PC-9 (cell line): ENCODE measurements at regions of chr11 and their contacts with region 1.

Region 1: GRCh38 chr11:72080256-72080974 is at the starts of genes LRRC51 and NUMA1:
- DNase-seq: peak; percentile 100
- H3K4me3 ChIP-seq: peak within 1 kb of the TSS; percentile 92
- H3K27ac ChIP-seq: peak within 1 kb of the TSS; percentile 62
- H3K4me1 ChIP-seq: peaks cover 41% of the 10 kb centered on the region
- H3K27me3 ChIP-seq: no peaks in the 10 kb centered on the region
- CTCF ChIP-seq: no peak
- total RNA-seq, gene LRRC51: 17.5 and 19.6 TPM in 2 replicates
- total RNA-seq, gene NUMA1: 221 and 267 TPM in 2 replicates

Region 2: DNA sequence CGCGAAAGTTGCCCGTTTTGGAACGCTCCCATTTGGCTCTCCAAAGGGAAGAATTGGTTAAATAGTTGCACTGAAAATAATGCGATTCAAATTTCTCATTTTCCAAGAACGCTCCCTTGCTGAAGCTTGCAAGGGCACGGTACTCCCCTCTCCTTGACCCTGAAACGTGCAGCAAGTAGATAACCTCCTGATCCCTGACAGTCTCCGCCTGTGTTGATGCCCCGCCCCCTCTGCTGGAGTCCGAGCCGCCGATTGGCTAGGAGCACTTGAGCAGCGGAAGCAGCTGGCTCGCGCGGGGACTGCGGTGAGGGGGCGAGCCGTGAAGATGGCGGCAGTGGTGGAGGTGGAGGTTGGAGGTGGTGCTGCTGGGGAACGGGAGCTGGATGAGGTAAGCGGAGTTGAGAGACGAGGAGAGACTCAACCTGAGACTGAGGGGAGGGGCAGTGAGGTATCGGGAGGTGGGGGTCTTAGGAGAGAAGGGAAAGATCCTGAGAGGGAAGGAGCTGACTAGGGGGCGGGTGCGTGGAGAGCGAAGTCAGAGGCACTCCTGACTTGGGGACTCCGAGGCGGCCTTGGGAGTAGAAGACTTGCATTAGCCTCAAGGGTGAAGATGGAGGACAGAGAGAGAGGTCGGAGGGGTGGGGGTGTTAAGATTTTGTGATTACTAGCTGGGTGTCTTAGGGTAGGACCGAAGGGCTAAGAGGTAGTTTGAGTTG is 151.5 kb before region 1 on chr11 and contains the start of gene RNF121:
- CTCF ChIA-PET with region 1: no interaction called
- POLR2A ChIA-PET with region 1: interaction called, 5 read pairs
- intact Hi-C with region 1: loop called (anchors 5 kb)
- DNase-seq: peak; percentile 93 to 95
- H3K4me3 ChIP-seq: peak within 1 kb of the TSS; percentile 89
- H3K27ac ChIP-seq: peak within 1 kb of the TSS; percentile 79
- H3K4me1 ChIP-seq: peaks cover 18% of the 10 kb centered on the region
- H3K27me3 ChIP-seq: no peaks in the 10 kb centered on the region
- CTCF ChIP-seq: no peak
- total RNA-seq, gene RNF121: 40.5 and 41.2 TPM in 2 replicates

Region 3: GRCh38 chr11:72040726-72041441 is 39.5 kb before region 1 on chr11:
- CTCF ChIA-PET with region 1: no interaction called
- POLR2A ChIA-PET with region 1: interaction called, 4 read pairs
- intact Hi-C with region 1: loop called (anchors 1 kb)
- DNase-seq: peak; percentile 78 to 90
- H3K4me3 ChIP-seq: peak overlapping the region; percentile 51
- H3K27ac ChIP-seq: peak overlapping the region; percentile 32
- H3K4me1 ChIP-seq: peaks cover 12% of the 10 kb centered on the region
- H3K27me3 ChIP-seq: no peaks in the 10 kb centered on the region
- CTCF ChIP-seq: no peak

Region 4: DNA sequence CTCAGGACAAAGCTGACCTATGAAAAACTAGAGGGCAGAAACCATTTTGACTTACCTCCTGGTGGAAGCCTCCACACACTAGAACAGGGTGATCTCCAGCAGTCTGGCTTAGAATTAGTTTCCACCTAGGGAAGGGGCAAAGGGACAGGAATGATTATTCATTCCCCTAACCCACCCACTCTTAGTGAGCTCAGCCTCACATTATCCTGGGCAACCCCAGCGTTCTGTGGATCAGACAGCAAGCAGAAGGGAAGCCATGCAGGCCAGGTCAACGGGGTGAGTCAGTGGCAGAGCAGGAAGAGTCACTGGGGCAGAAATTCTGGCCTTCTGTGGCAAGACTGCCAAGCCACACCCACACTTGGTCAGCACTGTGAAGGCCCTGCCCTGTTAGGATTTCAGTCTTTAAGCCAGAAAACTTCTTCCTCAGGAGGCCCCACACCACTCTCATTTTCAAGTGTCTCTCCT is 10.6 kb before region 1 on chr11:
- CTCF ChIA-PET with region 1: interaction called, 13 read pairs
- POLR2A ChIA-PET with region 1: interaction called, 3 read pairs
- intact Hi-C with region 1: loop called (anchors 1 kb)
- DNase-seq: peak; percentile 84 to 87
- H3K4me3 ChIP-seq: peak overlapping the region; percentile 35; the same call in 1 of the 2 replicates
- H3K27ac ChIP-seq: peak overlapping the region; percentile 83
- H3K4me1 ChIP-seq: peaks cover 57% of the 10 kb centered on the region
- H3K27me3 ChIP-seq: no peaks in the 10 kb centered on the region
- CTCF ChIP-seq: no peak

Region 5: GRCh38 chr11:72112321-72113219 is 32.2 kb after region 1 on chr11 and contains the start of gene ANAPC15:
- CTCF ChIA-PET with region 1: no interaction called
- POLR2A ChIA-PET with region 1: no interaction called
- intact Hi-C with region 1: loop called (anchors 1 kb)
- DNase-seq: peak; percentile 97 to 99
- H3K4me3 ChIP-seq: peak within 1 kb of the TSS; percentile 56
- H3K27ac ChIP-seq: peak within 1 kb of the TSS; percentile 70
- H3K4me1 ChIP-seq: peaks cover 14% of the 10 kb centered on the region
- H3K27me3 ChIP-seq: no peaks in the 10 kb centered on the region
- CTCF ChIP-seq: no peak
- total RNA-seq, gene ANAPC15: 77.2 and 97.8 TPM in 2 replicates

Region 6: DNA sequence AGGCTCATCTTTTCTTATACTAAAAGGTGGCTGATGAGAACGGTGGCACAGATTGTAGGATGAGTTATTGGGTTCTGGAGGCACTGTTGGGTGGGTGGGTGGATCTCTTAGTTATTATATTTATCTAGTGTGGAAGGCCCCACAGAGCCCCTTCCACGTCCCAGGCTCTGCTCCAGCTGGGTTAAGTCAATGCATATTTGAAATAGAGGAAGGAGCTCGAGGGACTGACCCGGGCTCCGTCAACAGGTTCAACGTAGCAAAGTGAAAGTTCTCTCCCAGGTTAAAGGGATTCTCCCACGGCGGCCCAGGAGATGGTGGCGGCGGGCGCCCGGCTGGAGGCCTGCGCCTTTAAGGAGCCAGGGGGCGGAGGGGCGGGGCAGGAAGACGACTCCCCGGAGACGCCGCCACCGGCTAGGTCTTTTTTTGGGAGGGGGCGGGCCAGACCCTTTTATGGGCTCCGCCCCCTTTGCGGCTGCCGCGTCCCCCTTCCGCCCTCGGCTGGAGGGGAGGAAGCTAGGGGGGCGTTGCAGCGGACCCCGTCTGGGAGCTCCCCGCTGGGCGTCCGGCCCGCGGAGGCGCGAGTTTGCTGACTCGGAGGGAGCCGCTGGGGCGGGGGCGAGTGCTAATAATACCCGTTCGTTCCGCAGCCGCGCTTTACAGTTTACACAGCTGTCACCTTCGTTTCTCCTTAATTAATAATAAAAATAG is 142.6 kb after region 1 on chr11:
- CTCF ChIA-PET with region 1: interaction called, 3 read pairs
- POLR2A ChIA-PET with region 1: interaction called, 4 read pairs
- intact Hi-C with region 1: loop called (anchors 5 kb)
- DNase-seq: peak; percentile 84 to 97
- H3K4me3 ChIP-seq: peak overlapping the region; percentile 97
- H3K27ac ChIP-seq: peak overlapping the region; percentile 50
- H3K4me1 ChIP-seq: peaks cover 23% of the 10 kb centered on the region
- H3K27me3 ChIP-seq: no peaks in the 10 kb centered on the region
- CTCF ChIP-seq: peak; percentile 68; the same call in 1 of the 2 replicates

Region 7: GRCh38 chr11:73680687-73681086 is 1600.3 kb after region 1 on chr11:
- CTCF ChIA-PET with region 1: no interaction called
- POLR2A ChIA-PET with region 1: interaction called, 12 read pairs
- intact Hi-C with region 1: no loop called
- DNase-seq: no peak
- H3K4me3 ChIP-seq: no peak overlapping the region
- H3K27ac ChIP-seq: no peak overlapping the region
- H3K4me1 ChIP-seq: no peaks in the 10 kb centered on the region
- H3K27me3 ChIP-seq: no peaks in the 10 kb centered on the region
- CTCF ChIP-seq: no peak